IMR-90 (cell line): ENCODE measurements at regions of chr9 and their contacts with region 1.

Region 1: DNA sequence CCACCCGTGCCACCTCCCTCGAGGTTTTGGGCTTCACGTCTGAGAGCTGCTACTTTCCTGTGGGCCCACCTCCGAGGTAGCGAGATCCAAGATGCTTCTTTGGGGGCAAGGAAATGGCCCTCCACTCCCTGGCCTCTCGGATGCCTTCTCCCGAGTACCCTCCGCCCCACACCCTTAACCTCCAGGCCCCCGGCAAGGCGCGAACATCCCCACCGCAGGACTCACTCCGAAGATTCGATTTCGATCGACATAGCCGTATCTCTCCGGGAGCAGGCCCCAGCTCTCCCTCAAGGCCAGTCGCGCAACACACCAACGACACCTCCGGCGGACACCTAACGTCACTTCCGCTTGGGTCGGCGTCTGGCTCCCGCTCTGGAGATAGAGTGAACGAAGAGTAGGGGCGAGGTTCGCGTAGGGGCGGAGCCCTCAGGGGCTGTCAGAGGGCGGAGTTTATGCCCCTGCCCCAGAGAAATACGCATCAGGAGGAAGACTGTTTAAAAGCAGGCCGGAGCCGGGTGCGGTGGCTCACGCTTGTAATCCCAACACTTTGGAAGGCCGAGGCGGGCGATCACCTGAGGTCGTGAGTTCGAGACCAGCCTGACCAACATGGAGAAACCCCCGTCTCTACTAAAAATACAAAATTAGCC is at the start of gene SMU1:
- DNase-seq: peak; percentile 96
- ATAC-seq: peak; percentile 98
- H3K4me3 ChIP-seq: peak within 1 kb of the TSS; percentile 90
- H3K27ac ChIP-seq: peak within 1 kb of the TSS; percentile 93
- H3K4me1 ChIP-seq: no peaks in the 10 kb centered on the region
- H3K27me3 ChIP-seq: no peaks in the 10 kb centered on the region
- CTCF ChIP-seq: no peak
- POLR2A ChIP-seq: peak; percentile 93
- RAD21 ChIP-seq: no peak
- total RNA-seq, gene SMU1: 36.0 and 37.8 TPM in 2 replicates

Region 2: GRCh38 chr9:32395490-32396216 is 680.8 kb before region 1 on chr9:
- CTCF ChIA-PET with region 1: no interaction called
- POLR2A ChIA-PET with region 1: no interaction called
- dilution Hi-C with region 1: no loop called
- in situ Hi-C with region 1: no loop called
- intact Hi-C with region 1: no loop called
- DNase-seq: peak; percentile 98
- ATAC-seq: peak; percentile 87
- H3K4me3 ChIP-seq: no peak overlapping the region
- H3K27ac ChIP-seq: peak overlapping the region; percentile 100
- H3K4me1 ChIP-seq: peaks cover 36% of the 10 kb centered on the region
- H3K27me3 ChIP-seq: no peaks in the 10 kb centered on the region
- CTCF ChIP-seq: peak; percentile 47
- POLR2A ChIP-seq: no peak
- RAD21 ChIP-seq: peak; percentile 40

Region 3: GRCh38 chr9:33017283-33018041 is 59.0 kb before region 1 on chr9:
- CTCF ChIA-PET with region 1: no interaction called
- POLR2A ChIA-PET with region 1: no interaction called
- dilution Hi-C with region 1: no loop called
- in situ Hi-C with region 1: no loop called
- intact Hi-C with region 1: no loop called
- DNase-seq: no peak
- ATAC-seq: no peak
- H3K4me3 ChIP-seq: no peak overlapping the region
- H3K27ac ChIP-seq: no peak overlapping the region
- H3K4me1 ChIP-seq: no peaks in the 10 kb centered on the region
- H3K27me3 ChIP-seq: no peaks in the 10 kb centered on the region
- CTCF ChIP-seq: no peak
- POLR2A ChIP-seq: no peak
- RAD21 ChIP-seq: no peak

Region 4: DNA sequence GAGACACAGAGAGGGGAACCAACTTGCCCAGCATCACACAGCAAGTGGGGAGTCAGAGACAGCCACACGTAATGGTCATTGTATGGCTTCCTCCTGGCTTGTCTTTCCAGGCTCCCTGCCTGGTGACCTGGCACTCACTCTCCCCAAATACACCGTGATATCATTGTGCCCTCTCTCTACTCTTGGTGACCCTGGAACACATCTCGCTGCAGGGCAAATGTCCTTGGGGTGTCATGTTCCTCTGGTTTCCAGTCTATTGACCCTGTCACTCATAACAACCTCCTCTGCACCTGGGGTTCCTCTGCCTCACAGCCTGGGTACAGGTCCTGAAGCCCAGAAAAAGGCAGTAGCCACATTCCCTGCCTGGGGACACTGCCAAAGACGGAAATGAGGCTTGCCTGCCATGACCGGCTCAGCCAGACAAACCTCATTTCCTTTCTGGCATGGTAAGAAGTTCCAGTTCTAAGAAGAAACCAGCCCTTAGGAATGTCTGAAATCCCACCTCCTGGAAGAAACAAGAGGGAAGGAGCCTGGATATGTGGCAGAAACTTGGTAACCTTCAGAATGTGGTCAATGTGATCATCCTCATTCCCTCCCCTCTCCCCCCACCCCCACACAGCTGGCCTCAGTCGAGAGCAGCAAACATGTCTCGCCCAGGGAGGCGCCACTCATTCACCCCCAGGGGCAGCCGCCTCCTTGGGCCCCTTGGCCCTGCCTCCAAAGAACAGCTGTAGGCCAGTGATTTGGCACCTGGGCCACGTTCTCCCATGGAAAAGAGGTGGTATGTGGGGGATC is 30.5 kb after region 1 on chr9:
- CTCF ChIA-PET with region 1: no interaction called
- POLR2A ChIA-PET with region 1: no interaction called
- dilution Hi-C with region 1: no loop called
- in situ Hi-C with region 1: no loop called
- intact Hi-C with region 1: loop called (anchors 2 kb)
- DNase-seq: peak; percentile 89
- ATAC-seq: peak; percentile 77
- H3K4me3 ChIP-seq: no peak overlapping the region
- H3K27ac ChIP-seq: peak overlapping the region; percentile 86
- H3K4me1 ChIP-seq: peaks cover 18% of the 10 kb centered on the region
- H3K27me3 ChIP-seq: no peaks in the 10 kb centered on the region
- CTCF ChIP-seq: no peak
- POLR2A ChIP-seq: no peak
- RAD21 ChIP-seq: no peak

Region 5: DNA sequence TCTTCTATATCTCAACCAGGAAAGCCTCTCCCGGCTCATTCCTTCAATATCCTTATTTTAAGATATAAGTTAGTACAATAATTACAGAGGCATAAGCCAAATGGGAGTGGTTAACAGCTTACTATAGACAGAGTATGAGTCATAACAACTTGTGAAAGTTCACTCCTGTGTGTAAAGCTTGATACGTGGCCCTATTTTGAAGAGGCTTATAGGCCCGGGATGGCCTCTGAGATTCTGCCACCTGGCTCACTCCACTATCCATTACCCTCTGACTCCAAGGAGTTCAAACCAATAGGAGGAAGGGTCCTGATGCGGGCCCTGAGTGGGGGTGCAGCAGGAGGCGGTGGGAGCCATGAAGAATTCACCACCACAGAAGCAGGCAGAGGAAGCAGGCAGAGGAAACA is 54.0 kb after region 1 on chr9:
- CTCF ChIA-PET with region 1: no interaction called
- POLR2A ChIA-PET with region 1: no interaction called
- dilution Hi-C with region 1: no loop called
- in situ Hi-C with region 1: no loop called
- intact Hi-C with region 1: loop called (anchors 5 kb)
- DNase-seq: peak; percentile 46
- ATAC-seq: no peak
- H3K4me3 ChIP-seq: no peak overlapping the region
- H3K27ac ChIP-seq: no peak overlapping the region
- H3K4me1 ChIP-seq: peaks cover 15% of the 10 kb centered on the region
- H3K27me3 ChIP-seq: no peaks in the 10 kb centered on the region
- CTCF ChIP-seq: no peak
- POLR2A ChIP-seq: no peak
- RAD21 ChIP-seq: no peak

Region 6: DNA sequence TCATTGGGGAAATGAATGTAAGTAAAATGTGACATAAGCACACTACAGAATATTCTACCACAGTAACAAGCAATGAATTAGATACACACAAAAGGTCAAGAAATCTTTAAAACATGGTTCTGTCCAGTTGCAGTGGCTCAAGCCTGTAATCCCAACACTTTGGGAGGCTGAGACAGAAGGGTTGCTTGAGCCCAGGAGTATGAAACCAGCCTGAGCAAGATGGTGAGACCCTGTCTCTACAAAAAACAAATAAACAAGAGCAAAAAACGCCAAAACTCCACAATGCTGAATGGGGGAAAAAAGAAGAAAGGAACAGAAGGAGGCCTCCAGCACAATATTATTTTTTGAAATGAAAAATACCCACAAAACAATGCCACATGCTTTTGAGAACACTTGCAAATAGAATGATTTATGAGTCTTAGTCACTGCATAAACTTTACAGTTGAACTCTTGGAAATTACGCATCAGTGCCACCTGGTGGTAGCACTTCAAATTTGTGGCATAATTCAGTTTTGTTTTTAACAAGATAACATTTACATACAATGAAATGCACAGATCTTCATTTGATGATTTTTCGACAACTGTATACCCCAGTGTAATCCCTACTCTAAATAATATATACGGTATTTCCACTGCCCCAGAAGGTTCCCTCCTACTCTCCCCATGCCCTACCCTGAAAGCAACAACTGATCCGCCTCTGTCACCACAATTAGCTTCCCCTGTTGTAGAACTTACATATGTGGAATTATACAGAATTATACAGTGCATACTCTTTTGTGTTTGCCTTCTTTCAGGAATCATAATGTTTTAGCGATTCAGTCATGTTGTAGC is 149.1 kb after region 1 on chr9:
- CTCF ChIA-PET with region 1: interaction called, 3 read pairs
- POLR2A ChIA-PET with region 1: no interaction called
- dilution Hi-C with region 1: no loop called
- in situ Hi-C with region 1: loop called (anchors 5 kb)
- intact Hi-C with region 1: loop called (anchors 1 kb)
- DNase-seq: peak; percentile 84
- ATAC-seq: peak; percentile 74
- H3K4me3 ChIP-seq: no peak overlapping the region
- H3K27ac ChIP-seq: no peak overlapping the region
- H3K4me1 ChIP-seq: peaks cover 7% of the 10 kb centered on the region
- H3K27me3 ChIP-seq: no peaks in the 10 kb centered on the region
- CTCF ChIP-seq: peak; percentile 89
- POLR2A ChIP-seq: no peak; the same call in 1 of the 2 replicates
- RAD21 ChIP-seq: peak; percentile 91